ENCODE measurements at regions of chr2 and their contacts with region 1.

Region 1: DNA sequence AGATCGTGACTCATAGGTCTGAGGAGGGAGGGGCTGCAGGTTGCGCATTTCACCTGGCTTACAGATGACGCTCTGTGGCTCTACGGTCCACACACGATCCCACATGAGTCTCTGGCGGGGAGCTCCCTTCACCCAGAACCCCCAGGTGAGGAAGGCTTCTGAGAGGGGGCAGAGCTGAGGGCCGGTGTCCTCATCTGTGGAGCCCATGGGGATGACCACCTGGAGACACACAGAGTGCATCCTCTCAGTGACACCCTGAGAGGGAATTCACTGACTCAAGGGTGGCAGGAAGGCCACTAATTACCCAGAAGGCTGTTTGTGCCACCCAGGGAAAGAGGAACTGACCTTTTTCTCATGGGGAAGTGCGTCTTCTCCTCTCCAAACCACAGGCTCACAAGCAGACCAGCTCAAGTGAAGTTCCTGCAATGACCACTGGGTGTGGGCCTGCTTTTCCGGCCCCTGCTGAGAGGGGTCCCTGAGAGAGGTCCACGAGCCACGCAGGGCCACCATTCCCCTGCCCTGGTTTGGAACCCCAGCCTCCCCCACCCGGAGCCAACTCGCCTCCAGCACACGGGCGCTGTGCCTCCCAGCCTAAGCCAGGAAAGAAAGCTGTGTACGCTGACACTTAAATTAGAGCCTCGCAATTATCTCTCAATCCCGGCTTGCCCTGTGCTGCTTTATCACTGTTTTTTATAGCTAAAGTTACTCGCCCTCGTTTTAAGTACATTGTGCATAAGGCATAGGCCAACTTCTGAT is 114.1 kb downstream of the BCL11A start:
- DNase-seq: peak; percentile 79
- ATAC-seq: peak; percentile 82

Region 2: GRCh38 chr2:60280286-60280685 is 159.1 kb before region 1 on chr2:
- intact Hi-C with region 1: loop called (anchors 5 kb)
- DNase-seq: no peak
- ATAC-seq: no peak

Region 3: GRCh38 chr2:60337140-60337494 is 102.3 kb before region 1 on chr2:
- intact Hi-C with region 1: loop called (anchors 5 kb)
- DNase-seq: no peak
- ATAC-seq: peak; percentile 74

Region 4: DNA sequence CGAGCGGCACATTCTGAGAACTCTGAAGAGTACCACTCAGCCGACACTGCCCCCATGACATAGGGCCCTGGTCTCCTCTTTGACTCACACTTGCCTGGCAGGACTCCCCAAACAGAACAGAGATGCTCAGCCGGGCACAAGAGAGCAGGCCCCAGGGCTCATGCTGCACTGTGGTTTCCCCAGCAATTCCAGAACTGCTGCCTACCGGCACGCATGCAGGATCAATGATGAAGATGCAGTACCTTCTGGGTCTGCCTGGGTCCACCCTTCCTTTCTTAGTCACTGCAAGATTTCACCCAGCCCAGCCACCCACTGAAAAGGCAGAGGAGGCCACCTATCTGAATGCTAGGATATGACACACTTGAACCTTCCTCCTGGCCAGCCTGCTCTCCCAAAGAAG is 64.7 kb after region 1 on chr2:
- intact Hi-C with region 1: loop called (anchors 5 kb)
- DNase-seq: no peak
- ATAC-seq: no peak

Region 5: DNA sequence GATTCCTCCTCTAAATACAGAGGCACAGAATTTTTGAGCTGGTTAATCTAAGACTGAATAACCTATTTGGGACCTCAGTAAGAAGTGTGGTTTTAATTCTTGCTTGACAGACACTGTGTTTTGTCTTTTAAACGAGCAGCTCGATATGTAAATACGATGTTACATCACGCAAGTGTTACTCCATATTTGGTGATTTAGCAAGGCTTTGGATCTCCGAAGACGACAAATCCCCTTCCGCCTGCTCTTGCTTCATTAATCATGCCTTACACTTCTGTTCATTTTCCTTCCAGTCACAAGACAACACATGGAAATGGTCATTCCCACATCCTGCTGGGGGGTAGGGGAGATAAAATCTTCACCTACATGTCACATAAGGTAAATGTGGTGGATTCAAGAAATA is 104.7 kb after region 1 on chr2:
- intact Hi-C with region 1: loop called (anchors 2 kb)
- DNase-seq: no peak
- ATAC-seq: no peak